Mammary epithelial cell (primary cell): ENCODE measurements at regions of chr1 and their contacts with region 1.

Region 1: GRCh38 chr1:205458777-205459566 is 3.1 kb upstream of the BLACAT1 start:
- DNase-seq: peak; percentile 68
- H3K4me3 ChIP-seq: no peak overlapping the region
- H3K27ac ChIP-seq: no peak overlapping the region
- H3K4me1 ChIP-seq: peaks cover 10% of the 10 kb centered on the region
- H3K27me3 ChIP-seq: peaks cover 26% of the 10 kb centered on the region
- CTCF ChIP-seq: no peak

Region 2: DNA sequence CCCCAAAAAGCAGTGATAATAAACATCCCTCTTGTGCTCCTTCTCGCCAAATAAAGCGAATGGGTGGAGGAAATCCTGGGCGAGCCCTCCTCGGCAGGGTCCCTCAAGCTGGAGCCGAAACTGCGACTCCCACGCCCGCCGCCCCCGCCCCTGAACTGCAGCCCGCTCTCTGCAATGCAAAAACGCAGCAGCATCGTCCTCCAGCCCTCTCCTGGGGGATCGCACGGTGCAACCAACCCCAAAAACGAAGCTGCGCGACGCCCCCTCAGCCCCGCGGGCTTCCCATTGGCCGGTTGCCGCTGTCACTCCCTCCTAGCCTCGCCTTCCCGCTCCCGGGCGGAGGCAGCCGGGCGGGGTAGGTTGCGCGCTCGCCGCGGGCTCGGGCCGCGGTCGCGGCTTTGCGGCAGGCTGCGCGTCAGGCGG is 231.4 kb before region 1 on chr1 and contains the start of gene TMCC2:
- CTCF ChIA-PET with region 1: no interaction called
- dilution Hi-C with region 1: no loop called
- in situ Hi-C with region 1: no loop called
- intact Hi-C with region 1: no loop called
- DNase-seq: peak; percentile 81
- H3K4me3 ChIP-seq: peak within 1 kb of the TSS; percentile 58 to 73 (median 71)
- H3K27ac ChIP-seq: peak within 1 kb of the TSS; percentile 78
- H3K4me1 ChIP-seq: peaks cover 39% of the 10 kb centered on the region
- H3K27me3 ChIP-seq: no peaks in the 10 kb centered on the region
- CTCF ChIP-seq: no peak
- total RNA-seq, gene TMCC2: 1.5 to 11.5 TPM

Region 3: GRCh38 chr1:205430696-205431305 is 28.2 kb before region 1 on chr1:
- CTCF ChIA-PET with region 1: no interaction called
- dilution Hi-C with region 1: loop called (anchors 5 kb)
- in situ Hi-C with region 1: no loop called
- intact Hi-C with region 1: no loop called
- DNase-seq: no peak
- H3K4me3 ChIP-seq: peak overlapping the region; percentile 26 to 49 (median 47)
- H3K27ac ChIP-seq: no peak overlapping the region
- H3K4me1 ChIP-seq: peaks cover 8% of the 10 kb centered on the region
- H3K27me3 ChIP-seq: peaks cover 3% of the 10 kb centered on the region
- CTCF ChIP-seq: peak; percentile 92 to 93